GM18951 (cell line): ENCODE measurements at regions of chr2 and their contacts with region 1.

Region 1: DNA sequence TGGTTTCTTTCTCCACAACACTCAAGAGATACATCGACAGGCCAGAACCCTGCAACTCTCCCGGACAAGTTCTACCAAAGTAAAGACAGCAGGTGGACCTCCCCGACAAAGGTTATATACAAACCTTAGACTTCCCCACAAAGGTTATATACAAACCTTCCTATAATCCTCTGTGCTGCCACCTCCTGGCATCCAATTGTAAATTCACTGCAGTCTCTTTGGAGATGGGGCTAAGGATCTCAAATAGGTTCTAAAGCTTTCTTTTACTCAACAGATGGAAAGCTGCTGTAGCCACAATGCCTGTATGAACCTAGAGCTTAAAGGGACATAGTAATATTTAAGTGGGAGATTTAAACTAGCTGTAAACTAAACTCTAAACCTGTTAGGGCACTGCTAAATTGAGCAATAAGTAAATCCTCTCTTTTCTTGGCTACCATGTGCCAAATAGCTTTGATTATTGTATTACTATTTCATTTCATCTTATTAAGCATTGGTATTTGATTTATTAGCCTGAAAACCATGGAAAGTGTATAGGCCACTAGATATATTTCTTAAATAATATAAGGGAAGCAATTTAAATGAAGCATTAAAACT is 9.8 kb upstream of the MREG start:
- POLR2A ChIP-seq: no peak

Region 2: GRCh38 chr2:215949991-215950404 is 73.2 kb before region 1 on chr2:
- in situ Hi-C with region 1: loop called (anchors 10 kb)
- POLR2A ChIP-seq: no peak